CD14-positive monocyte (primary cell): ENCODE measurements at regions of chr7 and their contacts with region 1.

Region 1: GRCh38 chr7:46357290-46357689 is 436.2 kb upstream of the IGFBP3 start:
- DNase-seq: no peak
- H3K4me3 ChIP-seq: no peak overlapping the region
- H3K4me3 Mint-ChIP-seq: no peak overlapping the region
- H3K27ac ChIP-seq: no peak overlapping the region
- H3K27ac Mint-ChIP-seq: no peak overlapping the region
- H3K4me1 ChIP-seq: no peaks in the 10 kb centered on the region
- H3K4me1 Mint-ChIP-seq: no peaks in the 10 kb centered on the region
- H3K27me3 ChIP-seq: no peaks in the 10 kb centered on the region
- H3K27me3 Mint-ChIP-seq: peaks cover 0 to 4% (median 2%) of the 10 kb centered on the region in 3 donors
- CTCF ChIP-seq: no peak

Region 2: GRCh38 chr7:46454816-46455215 is 97.5 kb after region 1 on chr7:
- intact Hi-C with region 1: no loop called
- DNase-seq: no peak
- H3K4me3 ChIP-seq: no peak overlapping the region
- H3K4me3 Mint-ChIP-seq: no peak overlapping the region
- H3K27ac ChIP-seq: no peak overlapping the region
- H3K27ac Mint-ChIP-seq: no peak overlapping the region
- H3K4me1 ChIP-seq: no peaks in the 10 kb centered on the region
- H3K4me1 Mint-ChIP-seq: no peaks in the 10 kb centered on the region
- H3K27me3 ChIP-seq: no peaks in the 10 kb centered on the region
- H3K27me3 Mint-ChIP-seq: no peaks in the 10 kb centered on the region
- CTCF ChIP-seq: no peak

Region 3: DNA sequence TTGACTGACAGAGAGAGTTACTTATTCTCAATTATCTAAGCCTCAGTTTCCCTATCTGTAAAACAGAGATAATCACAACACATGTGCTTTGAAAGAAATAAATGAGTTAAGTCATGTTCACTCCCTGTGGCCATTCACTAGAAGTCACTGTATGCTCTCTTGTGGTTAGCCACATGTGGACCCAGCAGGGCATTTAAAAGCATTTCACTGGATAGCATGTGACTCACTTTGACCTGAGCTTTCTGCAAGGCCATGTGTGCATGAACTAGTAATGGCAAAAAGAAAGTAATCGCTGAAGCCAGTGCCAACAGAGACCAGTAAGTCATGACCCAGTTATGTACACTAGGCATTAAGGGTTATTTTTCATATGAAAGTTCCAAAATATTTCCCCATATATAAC is 120.8 kb after region 1 on chr7:
- intact Hi-C with region 1: loop called in 1 of 2 experiments (anchors 5 kb)
- DNase-seq: no peak
- H3K4me3 ChIP-seq: no peak overlapping the region
- H3K4me3 Mint-ChIP-seq: no peak overlapping the region
- H3K27ac ChIP-seq: no peak overlapping the region
- H3K27ac Mint-ChIP-seq: no peak overlapping the region
- H3K4me1 ChIP-seq: no peaks in the 10 kb centered on the region
- H3K4me1 Mint-ChIP-seq: no peaks in the 10 kb centered on the region
- H3K27me3 ChIP-seq: no peaks in the 10 kb centered on the region
- H3K27me3 Mint-ChIP-seq: no peaks in the 10 kb centered on the region
- CTCF ChIP-seq: no peak